ENCODE measurements at regions of chr6 and their contacts with region 1.

Region 1: DNA sequence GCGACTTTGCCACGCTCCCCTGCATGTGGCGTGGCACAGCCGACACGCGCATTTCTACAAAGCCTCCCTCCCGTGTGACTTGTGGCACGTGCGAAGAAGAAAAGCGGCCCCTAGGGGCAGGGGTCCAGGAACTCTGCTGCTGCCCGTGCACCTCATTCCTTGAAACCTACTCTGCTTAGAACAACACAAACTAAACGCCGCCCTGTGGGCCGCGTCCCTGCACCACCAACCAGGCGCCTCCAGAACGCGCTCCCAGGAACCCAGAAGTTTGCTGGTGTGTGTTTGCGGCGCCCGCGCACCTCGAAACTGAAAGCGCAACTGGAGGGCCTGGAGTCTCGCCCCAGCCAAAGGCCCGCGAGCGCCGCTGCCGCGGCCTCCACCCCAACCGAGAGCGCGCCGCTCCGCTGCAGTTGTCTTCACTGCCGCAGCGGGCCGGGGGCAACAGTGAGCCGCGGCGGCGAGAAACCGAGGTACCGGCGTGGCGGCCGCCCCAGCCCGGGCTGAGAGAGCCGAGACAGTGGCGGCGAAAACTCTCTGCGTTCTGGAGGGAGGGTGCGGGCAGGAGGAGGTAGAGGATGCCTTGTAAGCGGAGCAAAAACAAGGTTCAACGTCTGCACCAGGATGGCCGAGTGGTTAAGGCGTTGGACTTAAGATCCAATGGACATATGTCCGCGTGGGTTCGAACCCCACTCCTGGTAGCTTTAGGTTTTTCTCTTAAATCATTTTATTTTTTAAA is 65.8 kb downstream of the STX11 start:
- DNase-seq: peak; percentile 95 to 97
- ATAC-seq: peak; percentile 94 to 96 (median 95)
- H3K4me3 ChIP-seq: peak overlapping the region; percentile 79
- H3K27ac ChIP-seq: peak overlapping the region; percentile 82
- H3K4me1 ChIP-seq: peaks cover 14% of the 10 kb centered on the region
- H3K27me3 ChIP-seq: no peaks in the 10 kb centered on the region
- CTCF ChIP-seq: peak; percentile 83

Region 2: GRCh38 chr6:144095331-144096002 is 120.6 kb before region 1 on chr6 and contains the start of gene SF3B5:
- intact Hi-C with region 1: loop called in 1 of 2 experiments (anchors 5 kb)
- DNase-seq: peak; percentile 98 to 99
- ATAC-seq: peak; percentile 99 to 100 (median 100)
- H3K4me3 ChIP-seq: peak within 1 kb of the TSS; percentile 95
- H3K27ac ChIP-seq: peak within 1 kb of the TSS; percentile 87
- H3K4me1 ChIP-seq: peaks cover 15% of the 10 kb centered on the region
- H3K27me3 ChIP-seq: no peaks in the 10 kb centered on the region
- CTCF ChIP-seq: no peak
- total RNA-seq, gene SF3B5: 115 to 146 (median 127) TPM

Region 3: GRCh38 chr6:144104898-144105487 is 111.1 kb before region 1 on chr6:
- intact Hi-C with region 1: loop called in 1 of 2 experiments (anchors 2 kb)
- DNase-seq: no peak
- ATAC-seq: peak; percentile 61 to 86 (median 68)
- H3K4me3 ChIP-seq: no peak overlapping the region
- H3K27ac ChIP-seq: no peak overlapping the region
- H3K4me1 ChIP-seq: no peaks in the 10 kb centered on the region
- H3K27me3 ChIP-seq: no peaks in the 10 kb centered on the region
- CTCF ChIP-seq: peak; percentile 64

Region 4: GRCh38 chr6:144149891-144150709 is 66.0 kb before region 1 on chr6 and contains the start of gene STX11:
- intact Hi-C with region 1: loop called in 1 of 2 experiments (anchors 2 kb)
- DNase-seq: peak; percentile 76 to 80
- ATAC-seq: peak; percentile 80 to 88 (median 87)
- H3K4me3 ChIP-seq: peak within 1 kb of the TSS; percentile 86
- H3K27ac ChIP-seq: peak within 1 kb of the TSS; percentile 11
- H3K4me1 ChIP-seq: no peaks in the 10 kb centered on the region
- H3K27me3 ChIP-seq: peaks cover 0 to 41% (median 10%) of the 10 kb centered on the region in 3 donors
- CTCF ChIP-seq: no peak
- total RNA-seq, gene STX11: 1.4 to 2.8 (median 1.7) TPM

Region 5: GRCh38 chr6:144266091-144266649 is 50.1 kb after region 1 on chr6:
- intact Hi-C with region 1: loop called in 1 of 2 experiments (anchors 2 kb)
- DNase-seq: peak; percentile 75 to 82
- ATAC-seq: peak; percentile 98 to 99 (median 98)
- H3K4me3 ChIP-seq: peak overlapping the region; percentile 9
- H3K27ac ChIP-seq: peak overlapping the region; percentile 74
- H3K4me1 ChIP-seq: peaks cover 24% of the 10 kb centered on the region
- H3K27me3 ChIP-seq: no peaks in the 10 kb centered on the region
- CTCF ChIP-seq: no peak

Region 6: DNA sequence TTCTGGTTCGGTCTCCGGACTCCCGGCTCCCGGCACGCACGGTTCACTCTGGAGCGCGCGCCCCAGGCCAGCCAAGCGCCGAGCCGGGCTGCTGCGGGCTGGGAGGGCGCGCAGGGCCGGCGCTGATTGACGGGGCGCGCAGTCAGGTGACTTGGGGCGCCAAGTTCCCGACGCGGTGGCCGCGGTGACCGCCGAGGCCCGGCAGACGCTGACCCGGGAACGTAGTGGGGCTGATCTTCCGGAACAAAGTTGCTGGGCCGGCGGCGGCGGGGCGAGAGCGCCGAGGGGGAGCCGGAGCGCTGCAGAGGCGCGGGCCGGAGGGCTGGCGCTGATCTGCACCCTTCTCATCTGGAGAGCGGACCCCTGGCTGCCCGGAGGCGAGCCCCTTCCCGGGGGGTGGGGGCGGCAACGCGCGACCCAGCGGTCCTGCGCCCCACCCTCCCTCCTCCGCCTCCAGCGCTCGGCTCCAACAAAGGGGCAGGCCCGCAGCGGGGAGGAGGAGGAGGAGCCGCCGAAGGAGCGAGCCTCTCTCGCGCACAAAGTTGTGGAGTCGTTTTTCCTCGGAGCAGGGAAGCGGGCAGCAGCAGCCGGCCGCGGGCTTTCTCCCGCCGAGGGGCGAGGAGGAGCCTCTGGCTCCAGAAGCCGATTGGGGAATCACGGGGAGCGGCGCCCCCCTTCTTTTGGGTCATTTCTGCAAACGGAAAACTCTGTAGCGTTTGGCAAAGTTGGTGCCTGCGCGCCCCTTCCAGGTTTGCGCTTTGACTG is 68.9 kb after region 1 on chr6 and contains the start of gene UTRN:
- intact Hi-C with region 1: loop called (anchors 1 to 5 kb)
- DNase-seq: peak; percentile 85 to 88
- ATAC-seq: peak; percentile 81 to 85 (median 83)
- H3K4me3 ChIP-seq: peak within 1 kb of the TSS; percentile 93
- H3K27ac ChIP-seq: peak within 1 kb of the TSS; percentile 86
- H3K4me1 ChIP-seq: peaks cover 8% of the 10 kb centered on the region
- H3K27me3 ChIP-seq: no peaks in the 10 kb centered on the region
- CTCF ChIP-seq: no peak
- total RNA-seq, gene UTRN: 29.1 to 64.9 (median 43.7) TPM

Region 7: DNA sequence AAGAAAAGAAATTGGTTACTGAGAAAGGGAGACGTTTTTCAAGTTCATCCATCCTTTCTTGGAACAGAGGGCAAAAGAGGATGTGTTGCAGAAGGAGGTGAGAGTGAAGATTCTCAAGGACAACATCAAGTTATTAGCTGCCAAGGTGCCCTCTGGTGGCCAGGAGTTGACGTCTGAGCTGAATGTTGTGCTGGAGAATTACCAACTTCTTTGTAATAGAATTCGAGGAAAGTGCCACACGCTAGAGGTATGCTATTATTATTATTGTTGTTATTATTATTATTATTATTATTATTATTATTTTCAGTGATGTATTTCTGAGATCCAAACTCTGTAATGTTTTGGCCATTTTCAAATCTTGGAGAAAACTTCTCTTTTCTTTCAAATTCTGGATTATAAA is 266.0 kb after region 1 on chr6:
- intact Hi-C with region 1: loop called (anchors 1 to 10 kb)
- DNase-seq: peak; percentile 74 to 83
- ATAC-seq: peak; percentile 27 to 57 (median 54)
- H3K4me3 ChIP-seq: no peak overlapping the region
- H3K27ac ChIP-seq: no peak overlapping the region
- H3K4me1 ChIP-seq: peaks cover 32% of the 10 kb centered on the region
- H3K27me3 ChIP-seq: no peaks in the 10 kb centered on the region
- CTCF ChIP-seq: peak; percentile 60

Measured in psoas muscle (tissue), 8 donors.